CD8-positive, alpha-beta memory T cell (primary cell): ENCODE measurements at regions of chr3 and their contacts with region 1.

Region 1: GRCh38 chr3:120713262-120713661 is 29.1 kb downstream of the RABL3 start:
- DNase-seq: no peak
- H3K4me3 ChIP-seq: no peak overlapping the region
- H3K4me3 Mint-ChIP-seq: no peak overlapping the region
- H3K27ac ChIP-seq: no peak overlapping the region
- H3K27ac Mint-ChIP-seq: peak overlapping the region in 3 of 8 donors; percentile 38 to 48 (median 43)
- H3K4me1 ChIP-seq: peaks cover 1% of the 10 kb centered on the region
- H3K4me1 Mint-ChIP-seq: peaks cover 5 to 21% (median 9%) of the 10 kb centered on the region in 3 donors
- H3K27me3 ChIP-seq: no peaks in the 10 kb centered on the region
- H3K27me3 Mint-ChIP-seq: no peaks in the 10 kb centered on the region

Region 2: GRCh38 chr3:120795017-120795648 is 81.9 kb after region 1 on chr3:
- CTCF ChIA-PET with region 1: interaction called, 11 read pairs
- POLR2A ChIA-PET with region 1: no interaction called
- DNase-seq: peak; percentile 60 to 85 (median 72)
- H3K4me3 ChIP-seq: no peak overlapping the region
- H3K4me3 Mint-ChIP-seq: no peak overlapping the region
- H3K27ac ChIP-seq: no peak overlapping the region
- H3K27ac Mint-ChIP-seq: no peak overlapping the region
- H3K4me1 ChIP-seq: no peaks in the 10 kb centered on the region
- H3K4me1 Mint-ChIP-seq: no peaks in the 10 kb centered on the region
- H3K27me3 ChIP-seq: no peaks in the 10 kb centered on the region
- H3K27me3 Mint-ChIP-seq: no peaks in the 10 kb centered on the region